Left cardiac atrium (tissue), 4 donors: ENCODE measurements at regions of chr1 and their contacts with region 1.

Region 1: DNA sequence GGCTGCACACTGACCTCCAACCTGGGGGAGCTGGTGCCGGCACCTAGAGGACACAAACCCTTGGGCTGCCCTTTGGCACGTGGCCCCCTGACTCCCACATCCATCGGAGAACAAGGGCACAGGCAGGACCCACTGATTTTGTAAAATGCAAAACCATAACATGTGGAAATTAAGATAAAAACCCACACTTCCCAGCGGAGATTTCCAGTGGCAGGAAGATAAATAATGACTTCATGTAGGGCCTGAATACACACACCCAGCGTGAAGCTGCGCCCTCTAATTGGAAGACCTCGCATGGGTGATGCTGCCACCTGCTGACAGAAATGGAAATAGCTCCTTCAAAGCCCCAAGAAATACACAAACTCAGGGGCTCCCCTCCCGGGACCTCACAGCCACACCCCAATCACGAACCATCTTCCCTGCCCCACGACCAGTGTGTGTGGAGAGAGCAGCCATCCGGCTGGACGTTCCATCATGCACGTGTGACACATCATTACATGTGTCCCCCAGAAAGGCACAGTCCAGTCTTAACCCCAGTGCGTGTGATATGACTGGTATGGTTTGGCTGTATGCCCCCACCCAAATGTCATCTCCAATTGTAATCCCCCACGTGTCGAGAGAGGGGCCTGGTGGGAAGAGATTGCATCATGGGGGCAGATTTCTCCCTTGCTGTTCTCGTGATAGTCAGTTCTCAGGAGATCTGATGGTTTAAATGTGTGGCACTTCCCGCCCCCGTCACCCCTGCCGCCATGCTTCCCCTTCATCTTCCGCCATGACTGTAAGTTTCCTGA is 5.7 kb upstream of the TPRG1L start:
- DNase-seq: peak; percentile 77
- ATAC-seq: peak; percentile 72 to 82

Region 2: DNA sequence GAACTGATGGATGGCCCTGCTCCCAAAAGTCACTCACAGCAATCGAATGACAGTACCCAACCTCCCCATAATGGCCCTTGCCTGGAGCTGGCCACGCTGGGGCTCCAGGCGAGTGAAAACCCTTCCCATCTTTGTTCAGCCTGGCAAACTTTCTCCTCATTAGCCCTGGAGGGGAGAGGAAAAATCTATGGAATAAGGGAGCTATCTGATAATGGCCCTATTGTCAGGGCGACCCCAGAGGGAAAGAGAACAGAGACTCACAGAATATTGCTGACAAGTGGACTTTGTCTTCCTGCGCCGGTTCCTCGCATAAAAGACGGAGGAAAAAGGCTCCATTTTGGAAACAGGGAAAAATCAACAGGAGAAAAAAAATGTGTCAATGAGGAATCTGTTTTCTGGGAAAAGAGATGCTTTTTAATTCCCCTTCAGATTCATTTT is 177.6 kb before region 1 on chr1:
- intact Hi-C with region 1: no loop called
- DNase-seq: no peak
- ATAC-seq: no peak

Region 3: DNA sequence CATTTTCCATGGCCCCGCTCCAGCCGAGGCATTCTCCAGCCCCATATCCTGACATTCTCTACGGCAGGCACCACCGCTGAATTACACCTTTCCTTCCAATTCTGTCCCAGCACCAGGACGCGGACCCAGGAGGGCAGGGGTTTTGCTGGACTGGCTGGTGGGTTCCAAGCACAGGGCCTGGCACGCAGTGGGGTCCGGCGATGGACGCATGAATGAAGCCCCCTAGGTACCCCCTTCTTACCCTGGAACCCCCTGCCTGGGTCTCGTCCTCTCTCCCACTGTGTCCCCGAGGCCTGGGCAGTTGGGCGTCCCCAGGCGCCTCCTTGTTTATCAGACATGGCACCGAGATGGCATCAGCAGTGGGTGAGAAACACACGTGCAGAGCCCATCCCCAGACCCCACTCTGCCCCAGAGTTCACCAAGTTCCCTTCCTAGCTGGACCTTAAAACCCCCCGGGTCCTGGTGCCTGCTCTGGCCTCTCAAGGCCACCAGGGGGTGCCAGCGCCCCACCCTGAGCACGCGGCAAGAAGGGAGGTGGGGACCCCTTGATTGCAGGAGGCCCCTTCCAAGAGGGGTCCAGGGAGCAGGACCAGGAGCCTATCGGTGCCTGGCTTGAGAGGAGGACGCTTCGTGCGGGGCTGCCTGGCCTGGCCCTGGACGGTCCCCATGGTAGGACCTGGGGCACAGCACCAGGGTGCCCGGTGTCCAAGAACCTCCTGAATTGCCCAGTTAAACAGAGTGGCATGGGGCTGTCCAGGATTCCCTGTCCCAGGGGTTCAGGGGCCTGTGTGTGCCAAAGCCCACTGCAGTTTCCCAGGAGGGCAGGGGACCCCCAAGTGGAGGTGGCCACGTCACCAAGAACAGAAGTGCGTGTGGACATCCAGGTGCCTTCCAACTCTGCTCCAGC is 53.9 kb before region 1 on chr1:
- intact Hi-C with region 1: loop called (anchors 2 to 5 kb)
- DNase-seq: no peak
- ATAC-seq: peak in 1 of 2 donors; percentile 24